ENCODE measurements at regions of chr14 and their contacts with region 1.

Region 1: DNA sequence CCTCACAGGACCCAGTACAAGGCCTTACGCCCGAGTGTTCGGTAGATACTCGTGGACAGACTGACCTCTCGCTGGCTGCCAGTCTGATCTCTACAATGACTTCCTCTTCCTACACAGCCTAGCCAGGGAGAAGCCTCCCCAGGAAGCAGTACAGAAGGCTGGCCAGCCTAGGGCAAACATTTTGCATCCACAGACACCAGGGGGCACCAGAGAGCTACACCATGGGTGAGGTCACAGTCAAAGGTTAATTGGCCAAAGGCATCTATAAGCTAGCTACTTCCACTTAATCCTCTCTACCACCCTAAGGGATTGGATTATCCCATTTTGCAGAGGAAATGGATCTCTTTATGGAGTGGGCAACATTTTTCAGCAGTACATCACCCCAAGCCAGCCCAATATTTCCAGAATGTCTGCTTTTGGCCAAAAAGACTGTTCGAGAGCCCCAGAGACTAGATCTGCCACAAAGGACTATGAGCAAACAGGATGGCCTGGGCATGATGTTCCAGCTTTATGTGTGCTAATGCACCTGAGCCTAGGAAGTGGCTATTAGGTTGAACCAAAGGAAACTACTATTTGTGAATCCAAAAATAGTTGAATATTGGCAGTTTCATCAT is 14.6 kb upstream of the PNMA1 start:
- DNase-seq: peak; percentile 65 to 91 (median 81)
- ATAC-seq: peak; percentile 96
- H3K4me3 ChIP-seq: no peak overlapping the region
- H3K4me3 Mint-ChIP-seq: peak overlapping the region in 1 of 10 donors; percentile 43
- H3K27ac ChIP-seq: no peak overlapping the region
- H3K27ac Mint-ChIP-seq: peak overlapping the region; percentile 60 to 90 (median 84)
- H3K4me1 ChIP-seq: peaks cover 4 to 12% of the 10 kb centered on the region in 2 donors
- H3K4me1 Mint-ChIP-seq: peaks cover 5 to 42% (median 16%) of the 10 kb centered on the region in 7 donors
- H3K27me3 ChIP-seq: no peaks in the 10 kb centered on the region
- H3K27me3 Mint-ChIP-seq: no peaks in the 10 kb centered on the region

Region 2: DNA sequence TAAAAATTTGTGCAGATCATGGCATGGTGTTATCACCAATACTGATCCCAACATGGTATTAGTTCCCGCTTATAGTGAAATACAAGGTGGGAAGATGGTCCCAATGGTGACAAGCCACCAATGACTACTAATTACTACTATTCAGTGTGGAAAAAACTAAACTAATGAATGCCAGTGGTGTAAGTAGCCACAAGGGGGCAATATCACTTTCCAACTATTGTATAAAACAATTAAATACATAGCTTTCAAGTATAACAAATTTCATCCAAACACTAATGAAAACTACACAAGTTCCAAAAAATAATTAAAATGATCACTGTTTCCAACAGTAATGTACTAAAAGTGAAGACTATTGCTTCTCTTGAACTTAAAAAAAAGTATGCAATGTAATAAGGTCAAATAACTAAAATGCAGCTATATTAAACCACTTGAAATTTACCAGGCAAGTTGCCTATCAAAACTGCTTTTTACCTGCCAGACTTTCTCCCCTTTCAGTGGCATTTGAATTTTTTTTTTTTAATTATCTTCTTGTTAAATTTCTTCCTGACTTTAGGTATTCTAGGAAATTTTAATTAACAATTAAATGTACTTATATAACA is 433.5 kb before region 1 on chr14:
- CTCF ChIA-PET with region 1: no interaction called
- POLR2A ChIA-PET with region 1: no interaction called
- intact Hi-C with region 1: no loop called
- DNase-seq: peak in 5 of 9 donors; percentile 27 to 53 (median 43)
- ATAC-seq: peak; percentile 70
- H3K4me3 ChIP-seq: no peak overlapping the region
- H3K4me3 Mint-ChIP-seq: no peak overlapping the region
- H3K27ac ChIP-seq: no peak overlapping the region
- H3K27ac Mint-ChIP-seq: no peak overlapping the region
- H3K4me1 ChIP-seq: no peaks in the 10 kb centered on the region
- H3K4me1 Mint-ChIP-seq: peaks cover 0 to 18% (median 0%) of the 10 kb centered on the region in 7 donors
- H3K27me3 ChIP-seq: no peaks in the 10 kb centered on the region
- H3K27me3 Mint-ChIP-seq: no peaks in the 10 kb centered on the region

Region 3: GRCh38 chr14:73753959-73754882 is 25.4 kb after region 1 on chr14:
- CTCF ChIA-PET with region 1: interaction called, 31 read pairs
- POLR2A ChIA-PET with region 1: interaction called, 31 read pairs
- intact Hi-C with region 1: loop called (anchors 1 kb)
- DNase-seq: peak in 2 of 9 donors; percentile 29 to 45
- ATAC-seq: peak; percentile 53
- H3K4me3 ChIP-seq: peak overlapping the region; percentile 59
- H3K4me3 Mint-ChIP-seq: peak overlapping the region; percentile 83 to 97 (median 90)
- H3K27ac ChIP-seq: peak overlapping the region; percentile 86
- H3K27ac Mint-ChIP-seq: peak overlapping the region; percentile 84 to 99 (median 99)
- H3K4me1 ChIP-seq: peaks cover 85 to 86% of the 10 kb centered on the region in 2 donors
- H3K4me1 Mint-ChIP-seq: peaks cover 79 to 95% (median 93%) of the 10 kb centered on the region in 7 donors
- H3K27me3 ChIP-seq: no peaks in the 10 kb centered on the region
- H3K27me3 Mint-ChIP-seq: no peaks in the 10 kb centered on the region

Region 4: DNA sequence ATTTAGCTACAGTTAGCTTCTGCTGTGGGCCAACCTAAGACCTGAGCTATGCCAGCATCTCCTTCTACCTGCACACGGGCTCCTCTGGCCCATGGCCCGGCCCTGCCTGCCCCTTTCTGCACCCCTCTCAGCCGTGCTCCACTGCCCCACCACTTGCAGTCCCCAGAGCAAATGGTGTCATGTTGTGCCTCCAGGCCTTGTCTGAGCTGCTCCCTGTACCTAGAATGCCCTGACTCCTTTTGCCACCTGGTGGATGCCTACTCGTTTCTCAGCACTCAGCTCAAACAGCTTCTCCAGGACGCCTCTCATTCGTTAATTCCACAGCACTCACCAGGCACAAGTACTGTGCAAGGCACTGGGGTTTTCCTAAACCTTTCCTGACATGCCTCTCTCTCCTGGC is 48.6 kb after region 1 on chr14:
- CTCF ChIA-PET with region 1: interaction called, 17 read pairs
- POLR2A ChIA-PET with region 1: interaction called, 3 read pairs
- intact Hi-C with region 1: loop called in 1 of 2 experiments (anchors 1 kb)
- DNase-seq: peak in 3 of 9 donors; percentile 34 to 52 (median 52)
- ATAC-seq: peak; percentile 67
- H3K4me3 ChIP-seq: no peak overlapping the region
- H3K4me3 Mint-ChIP-seq: peak overlapping the region in 6 of 10 donors; percentile 15 to 59 (median 27)
- H3K27ac ChIP-seq: no peak overlapping the region
- H3K27ac Mint-ChIP-seq: peak overlapping the region in 8 of 9 donors; percentile 40 to 87 (median 78)
- H3K4me1 ChIP-seq: peaks cover 31 to 48% of the 10 kb centered on the region in 2 donors
- H3K4me1 Mint-ChIP-seq: peaks cover 57 to 83% (median 69%) of the 10 kb centered on the region in 7 donors
- H3K27me3 ChIP-seq: no peaks in the 10 kb centered on the region
- H3K27me3 Mint-ChIP-seq: no peaks in the 10 kb centered on the region

Region 5: GRCh38 chr14:73825551-73826188 is 96.8 kb after region 1 on chr14:
- CTCF ChIA-PET with region 1: interaction called, 100 read pairs
- POLR2A ChIA-PET with region 1: interaction called, 9 read pairs
- intact Hi-C with region 1: loop called (anchors 1 kb)
- DNase-seq: peak; percentile 51 to 76 (median 66)
- ATAC-seq: peak; percentile 96
- H3K4me3 ChIP-seq: no peak overlapping the region
- H3K4me3 Mint-ChIP-seq: no peak overlapping the region
- H3K27ac ChIP-seq: no peak overlapping the region
- H3K27ac Mint-ChIP-seq: no peak overlapping the region
- H3K4me1 ChIP-seq: no peaks in the 10 kb centered on the region
- H3K4me1 Mint-ChIP-seq: peaks cover 0 to 21% (median 0%) of the 10 kb centered on the region in 7 donors
- H3K27me3 ChIP-seq: no peaks in the 10 kb centered on the region
- H3K27me3 Mint-ChIP-seq: peaks cover 0 to 3% (median 0%) of the 10 kb centered on the region in 5 donors

Region 6: GRCh38 chr14:73949744-73950734 is 221.2 kb after region 1 on chr14 and contains the starts of genes COQ6 and FAM161B:
- CTCF ChIA-PET with region 1: no interaction called
- POLR2A ChIA-PET with region 1: no interaction called
- intact Hi-C with region 1: loop called in 1 of 2 experiments (anchors 2 kb)
- DNase-seq: peak; percentile 82 to 97 (median 95)
- ATAC-seq: peak; percentile 96
- H3K4me3 ChIP-seq: peak within 1 kb of the TSS; percentile 92
- H3K4me3 Mint-ChIP-seq: peak within 1 kb of the TSS; percentile 96 to 99 (median 98)
- H3K27ac ChIP-seq: peak within 1 kb of the TSS; percentile 94
- H3K27ac Mint-ChIP-seq: peak within 1 kb of the TSS; percentile 93 to 98 (median 95)
- H3K4me1 ChIP-seq: peaks cover 0 to 4% of the 10 kb centered on the region in 2 donors
- H3K4me1 Mint-ChIP-seq: peaks cover 5 to 34% (median 27%) of the 10 kb centered on the region in 7 donors
- H3K27me3 ChIP-seq: no peaks in the 10 kb centered on the region
- H3K27me3 Mint-ChIP-seq: no peaks in the 10 kb centered on the region
- total RNA-seq, gene COQ6: 22.8 to 47.3 (median 36.4) TPM
- total RNA-seq, gene FAM161B: 1.8 to 6.6 (median 3.7) TPM

Measured in naive thymus-derived CD4-positive, alpha-beta T cell (primary cell).